ENCODE measurements at regions of chr7 and their contacts with region 1.

Region 1: GRCh38 chr7:37181550-37181932 is 267.1 kb downstream of the ELMO1 start:
- DNase-seq: no peak
- ATAC-seq: peak; percentile 13
- H3K4me3 Mint-ChIP-seq: no peak overlapping the region
- H3K27ac Mint-ChIP-seq: no peak overlapping the region
- H3K4me1 Mint-ChIP-seq: peaks cover 11% of the 10 kb centered on the region
- H3K27me3 Mint-ChIP-seq: no peaks in the 10 kb centered on the region

Region 2: GRCh38 chr7:36440880-36441279 is 740.7 kb before region 1 on chr7:
- CTCF ChIA-PET with region 1: interaction called, 29 read pairs
- POLR2A ChIA-PET with region 1: no interaction called
- DNase-seq: no peak
- ATAC-seq: no peak
- H3K4me3 Mint-ChIP-seq: no peak overlapping the region
- H3K27ac Mint-ChIP-seq: no peak overlapping the region
- H3K4me1 Mint-ChIP-seq: no peaks in the 10 kb centered on the region
- H3K27me3 Mint-ChIP-seq: no peaks in the 10 kb centered on the region

Region 3: DNA sequence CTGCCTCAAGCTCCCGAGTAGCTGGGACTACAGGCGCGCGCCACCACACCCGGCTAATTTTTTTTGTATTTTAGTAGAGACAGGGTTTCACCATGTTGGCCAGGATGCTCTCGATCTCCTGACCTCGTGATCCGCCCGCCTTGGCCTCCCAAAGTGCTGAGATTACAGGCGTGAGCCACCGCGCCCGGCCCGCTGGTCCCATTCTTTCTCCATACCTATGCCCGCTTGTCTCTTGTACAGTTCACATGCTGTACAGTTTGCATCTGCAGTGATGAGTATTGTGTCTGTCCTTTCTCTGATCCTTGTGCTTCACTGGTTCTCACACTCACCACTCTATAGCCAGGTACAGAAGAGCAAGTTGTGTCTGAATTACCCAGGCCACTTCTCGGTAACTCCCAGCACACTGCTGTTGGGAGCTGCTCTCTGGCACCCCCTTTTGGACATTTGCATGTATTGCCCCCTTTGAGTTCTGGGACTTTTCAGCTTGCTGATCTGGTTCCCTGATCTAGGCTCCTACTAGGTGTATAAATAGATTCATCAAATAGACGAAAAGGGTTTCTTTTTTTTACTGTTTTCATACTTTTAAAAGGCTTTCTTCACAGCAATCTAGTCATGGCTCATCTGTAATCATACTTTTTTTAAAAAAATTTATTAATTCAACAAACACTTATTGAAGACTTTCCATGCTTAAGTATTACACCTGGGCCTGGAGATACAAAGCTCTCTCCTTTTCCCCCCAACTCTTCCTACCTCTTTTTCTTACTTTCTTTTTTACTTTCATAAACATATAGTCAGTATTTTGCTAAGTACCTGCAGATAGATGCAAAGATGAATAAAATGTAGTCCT is 510.7 kb before region 1 on chr7:
- CTCF ChIA-PET with region 1: interaction called, 45 read pairs
- POLR2A ChIA-PET with region 1: interaction called, 3 read pairs
- DNase-seq: peak; percentile 85
- ATAC-seq: peak; percentile 94
- H3K4me3 Mint-ChIP-seq: no peak overlapping the region
- H3K27ac Mint-ChIP-seq: peak overlapping the region; percentile 63
- H3K4me1 Mint-ChIP-seq: peaks cover 33% of the 10 kb centered on the region
- H3K27me3 Mint-ChIP-seq: no peaks in the 10 kb centered on the region

Region 4: GRCh38 chr7:36683695-36684357 is 497.7 kb before region 1 on chr7:
- CTCF ChIA-PET with region 1: interaction called, 21 read pairs
- POLR2A ChIA-PET with region 1: no interaction called
- DNase-seq: no peak
- ATAC-seq: no peak
- H3K4me3 Mint-ChIP-seq: no peak overlapping the region
- H3K27ac Mint-ChIP-seq: peak overlapping the region; percentile 28
- H3K4me1 Mint-ChIP-seq: peaks cover 69% of the 10 kb centered on the region
- H3K27me3 Mint-ChIP-seq: no peaks in the 10 kb centered on the region

Region 5: GRCh38 chr7:36979810-36980248 is 201.7 kb before region 1 on chr7:
- CTCF ChIA-PET with region 1: interaction called, 10 read pairs
- POLR2A ChIA-PET with region 1: no interaction called
- DNase-seq: no peak
- ATAC-seq: no peak
- H3K4me3 Mint-ChIP-seq: no peak overlapping the region
- H3K27ac Mint-ChIP-seq: no peak overlapping the region
- H3K4me1 Mint-ChIP-seq: peaks cover 9% of the 10 kb centered on the region
- H3K27me3 Mint-ChIP-seq: no peaks in the 10 kb centered on the region

Region 6: GRCh38 chr7:37201003-37201875 is 19.7 kb after region 1 on chr7:
- CTCF ChIA-PET with region 1: interaction called, 37 read pairs
- POLR2A ChIA-PET with region 1: no interaction called
- DNase-seq: peak; percentile 66
- ATAC-seq: peak; percentile 45
- H3K4me3 Mint-ChIP-seq: no peak overlapping the region
- H3K27ac Mint-ChIP-seq: no peak overlapping the region
- H3K4me1 Mint-ChIP-seq: peaks cover 2% of the 10 kb centered on the region
- H3K27me3 Mint-ChIP-seq: no peaks in the 10 kb centered on the region

Region 7: GRCh38 chr7:37311355-37311754 is 129.8 kb after region 1 on chr7:
- CTCF ChIA-PET with region 1: no interaction called
- POLR2A ChIA-PET with region 1: no interaction called
- DNase-seq: no peak
- ATAC-seq: peak; percentile 37
- H3K4me3 Mint-ChIP-seq: no peak overlapping the region
- H3K27ac Mint-ChIP-seq: peak overlapping the region; percentile 88
- H3K4me1 Mint-ChIP-seq: peaks cover 53% of the 10 kb centered on the region
- H3K27me3 Mint-ChIP-seq: no peaks in the 10 kb centered on the region

Measured in activated CD8-positive, alpha-beta T cell treated with anti-CD3 and anti-CD28 coated beads, Interleukin-2, amount 10 ng/mL, durations not matched to agents 7 days and 5 days (primary cell).